ENCODE measurements at regions of chr2 and their contacts with region 1.

Region 1: DNA sequence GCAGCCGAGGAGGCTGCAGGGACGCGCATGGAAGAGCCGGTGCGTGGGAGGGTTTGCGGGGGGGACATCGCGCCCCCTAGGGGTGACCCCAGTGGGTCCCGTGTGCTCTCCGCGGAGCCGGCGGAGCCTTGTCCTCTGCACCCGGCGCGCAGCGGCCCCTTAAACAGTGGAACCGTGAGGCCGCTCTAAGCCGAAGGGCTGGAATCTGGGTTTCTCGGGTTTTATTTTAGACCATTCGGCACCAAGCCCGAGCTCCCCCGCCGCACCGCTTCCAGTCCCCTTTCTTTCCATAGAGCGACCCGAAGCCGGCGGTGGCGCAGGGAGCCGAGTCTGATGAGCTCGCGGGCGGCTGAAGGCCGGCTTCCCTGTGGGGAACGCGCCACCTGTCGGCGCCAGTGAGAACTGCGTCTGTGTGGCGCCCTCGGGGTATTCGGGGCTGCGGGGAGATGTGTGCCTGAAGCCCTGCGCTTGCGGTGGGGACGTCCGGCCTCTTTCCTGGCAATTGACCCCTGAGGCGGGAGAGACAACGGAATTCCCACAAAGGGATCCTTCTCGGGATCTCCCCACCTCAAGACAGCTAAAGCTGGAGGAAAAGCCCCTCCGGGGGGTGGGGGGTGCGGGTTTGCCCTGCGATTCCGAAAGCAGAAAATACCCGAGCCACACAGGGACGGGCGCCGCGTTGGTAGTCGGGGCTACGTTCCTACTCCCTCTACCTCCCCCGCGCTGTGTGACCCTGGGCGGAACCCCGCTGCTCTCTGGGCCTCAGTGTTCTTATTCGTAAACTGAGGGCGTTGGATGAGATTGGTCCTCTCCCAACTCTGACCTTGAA is 8.2 kb upstream of the EN1 start:
- DNase-seq: peak; percentile 91
- H3K27ac ChIP-seq: no peak overlapping the region
- CTCF ChIP-seq: peak; percentile 90

Region 2: DNA sequence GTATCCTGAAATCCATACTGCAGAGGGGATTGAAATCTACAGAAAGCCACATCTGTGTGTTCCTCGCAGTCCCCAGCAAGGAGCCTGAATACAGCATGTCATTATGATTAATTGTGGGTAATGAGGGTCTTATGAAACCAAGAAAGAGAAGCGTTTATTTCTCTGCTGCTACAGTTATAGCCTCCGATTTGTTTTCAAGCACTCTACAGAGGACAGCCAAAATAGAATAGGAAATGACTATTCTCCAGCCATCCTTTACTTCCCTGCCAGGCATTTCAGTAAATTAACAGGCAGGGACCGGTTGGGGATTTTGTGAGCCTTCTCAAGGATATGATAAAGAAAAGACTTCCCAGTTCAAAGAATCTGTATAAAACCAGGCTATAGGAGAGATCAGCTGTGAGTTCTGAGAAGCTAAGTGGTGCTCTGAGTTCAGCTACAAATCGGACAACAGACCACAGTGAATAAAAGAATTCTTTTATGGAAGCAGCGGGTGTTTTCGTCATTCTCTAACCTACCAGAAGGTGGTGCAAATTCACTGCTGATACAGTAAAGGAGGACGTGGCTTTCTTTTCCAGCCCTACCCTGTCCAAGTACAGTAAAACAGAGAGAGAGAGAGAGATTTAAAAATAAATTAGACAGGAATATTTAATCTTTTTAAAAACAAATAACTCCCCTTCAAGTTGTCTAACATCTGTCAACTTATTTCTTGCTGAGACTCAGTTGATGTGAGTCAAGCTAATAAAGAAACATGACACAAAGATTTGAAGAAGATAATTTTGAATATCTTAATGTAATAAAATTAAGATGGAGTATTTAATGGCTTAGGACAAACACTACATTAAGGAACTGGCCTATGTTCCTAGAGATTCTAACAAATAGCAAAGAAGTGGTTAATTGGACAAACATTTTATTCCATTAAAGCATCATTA is 633.7 kb before region 1 on chr2:
- CTCF ChIA-PET with region 1: interaction called, 28 read pairs
- POLR2A ChIA-PET with region 1: no interaction called
- DNase-seq: peak; percentile 65
- H3K27ac ChIP-seq: no peak overlapping the region
- CTCF ChIP-seq: peak; percentile 77